CD14-positive monocyte (primary cell): ENCODE measurements at regions of chr5 and their contacts with region 1.

Region 1: DNA sequence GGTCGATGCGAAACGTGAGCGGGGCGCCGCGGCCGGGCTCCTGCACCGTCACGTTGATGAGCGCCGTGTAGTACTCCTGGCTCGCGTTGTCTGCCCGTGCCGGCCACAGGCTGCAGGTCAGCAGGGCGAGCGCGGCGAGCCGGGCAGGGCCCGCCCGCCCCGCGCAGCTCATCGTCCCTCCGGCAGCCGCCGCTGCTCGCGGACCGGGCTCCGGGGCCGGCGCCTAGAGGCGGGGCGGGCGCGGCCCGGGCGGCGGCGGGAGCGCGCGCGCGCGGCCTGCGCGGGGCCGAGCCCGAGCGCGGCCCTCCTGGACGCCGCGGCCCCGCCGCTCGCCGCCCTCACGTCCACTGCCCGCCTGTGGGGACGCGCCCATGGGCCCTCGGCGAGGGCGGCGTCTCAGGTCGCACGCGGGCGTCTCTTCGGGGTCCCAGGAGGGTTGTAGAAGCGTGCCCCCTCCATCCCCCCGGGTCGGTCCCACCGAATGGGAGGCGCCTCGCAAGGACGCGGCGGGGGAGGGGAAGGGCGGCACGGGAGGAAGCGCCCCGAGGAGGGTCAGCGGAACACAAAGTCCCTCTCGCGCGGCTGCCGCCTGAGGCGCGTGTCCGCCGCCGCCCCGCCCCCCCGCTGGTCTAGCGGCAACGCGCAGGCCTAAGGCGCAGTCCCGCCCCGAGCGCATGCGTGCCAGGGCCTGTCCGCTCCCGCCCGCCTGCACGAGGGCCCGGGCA is at the start of gene RNF130:
- DNase-seq: peak; percentile 93 to 95 (median 93)
- H3K4me3 ChIP-seq: peak within 1 kb of the TSS; percentile 75 to 82 (median 82)
- H3K4me3 Mint-ChIP-seq: peak within 1 kb of the TSS; percentile 92 to 98
- H3K27ac ChIP-seq: peak within 1 kb of the TSS; percentile 92 to 93
- H3K27ac Mint-ChIP-seq: peak within 1 kb of the TSS; percentile 93 to 97 (median 96)
- H3K4me1 ChIP-seq: peaks cover 42 to 45% of the 10 kb centered on the region in 2 donors
- H3K4me1 Mint-ChIP-seq: peaks cover 39% of the 10 kb centered on the region
- H3K27me3 ChIP-seq: no peaks in the 10 kb centered on the region
- H3K27me3 Mint-ChIP-seq: peaks cover 3 to 5% (median 5%) of the 10 kb centered on the region in 3 donors
- CTCF ChIP-seq: no peak
- polyA plus RNA-seq, gene RNF130: 294 to 439 (median 376) TPM

Region 2: DNA sequence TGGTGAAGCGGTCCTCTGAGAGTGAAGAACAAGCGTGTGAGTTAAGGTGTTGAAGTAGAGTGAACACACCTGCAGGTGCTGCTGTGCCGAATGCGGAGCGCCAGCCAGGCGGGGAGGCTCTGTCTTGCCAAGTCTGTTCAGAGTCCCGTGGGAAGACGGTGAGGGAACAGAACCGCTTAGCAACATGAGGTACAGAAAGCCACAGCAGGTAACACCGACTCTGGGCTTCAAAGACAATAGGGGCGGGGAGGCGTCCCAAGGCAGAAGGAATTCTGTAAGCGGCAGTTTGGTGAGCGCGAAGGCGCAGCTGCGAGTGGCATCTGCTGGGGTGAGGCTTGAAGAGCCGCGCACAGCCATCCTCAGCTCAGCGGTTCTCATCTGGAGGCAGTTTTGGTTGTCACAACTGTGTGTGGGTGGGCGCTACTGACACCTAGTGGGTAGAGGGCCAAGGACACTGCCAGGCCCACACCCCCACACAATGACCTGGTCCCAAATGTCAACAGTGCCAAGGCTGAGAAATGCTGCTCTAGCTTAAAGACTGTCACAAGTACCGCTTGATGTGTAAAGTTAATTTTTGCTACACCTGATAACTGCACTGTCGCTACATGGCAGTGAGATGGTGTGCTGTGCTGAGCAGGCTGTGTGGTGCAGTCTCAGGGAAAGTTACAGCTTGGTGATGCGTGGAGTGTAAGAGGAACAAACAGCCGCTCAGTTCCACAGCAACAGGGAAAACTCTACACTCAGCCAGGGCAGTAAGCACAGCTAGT is 96.6 kb before region 1 on chr5:
- intact Hi-C with region 1: loop called in 1 of 2 experiments (anchors 10 kb)
- DNase-seq: peak; percentile 10 to 29 (median 21)
- H3K4me3 ChIP-seq: no peak overlapping the region
- H3K4me3 Mint-ChIP-seq: no peak overlapping the region
- H3K27ac ChIP-seq: peak overlapping the region in 1 of 2 donors; percentile 39
- H3K27ac Mint-ChIP-seq: peak overlapping the region; percentile 15 to 78 (median 35)
- H3K4me1 ChIP-seq: peaks cover 25% of the 10 kb centered on the region in 2 donors
- H3K4me1 Mint-ChIP-seq: peaks cover 27% of the 10 kb centered on the region
- H3K27me3 ChIP-seq: no peaks in the 10 kb centered on the region
- H3K27me3 Mint-ChIP-seq: no peaks in the 10 kb centered on the region
- CTCF ChIP-seq: peak; percentile 56

Region 3: GRCh38 chr5:180009581-180009980 is 62.1 kb before region 1 on chr5:
- intact Hi-C with region 1: no loop called
- DNase-seq: no peak
- H3K4me3 ChIP-seq: no peak overlapping the region
- H3K4me3 Mint-ChIP-seq: no peak overlapping the region
- H3K27ac ChIP-seq: no peak overlapping the region
- H3K27ac Mint-ChIP-seq: no peak overlapping the region
- H3K4me1 ChIP-seq: peaks cover 0 to 20% of the 10 kb centered on the region in 2 donors
- H3K4me1 Mint-ChIP-seq: peaks cover 25% of the 10 kb centered on the region
- H3K27me3 ChIP-seq: no peaks in the 10 kb centered on the region
- H3K27me3 Mint-ChIP-seq: no peaks in the 10 kb centered on the region
- CTCF ChIP-seq: no peak

Region 4: GRCh38 chr5:180021805-180022217 is 49.9 kb before region 1 on chr5:
- intact Hi-C with region 1: loop called in 1 of 2 experiments (anchors 5 kb)
- DNase-seq: no peak
- H3K4me3 ChIP-seq: no peak overlapping the region
- H3K4me3 Mint-ChIP-seq: no peak overlapping the region
- H3K27ac ChIP-seq: peak overlapping the region in 1 of 2 donors; percentile 16
- H3K27ac Mint-ChIP-seq: peak overlapping the region in 1 of 7 donors; percentile 0
- H3K4me1 ChIP-seq: peaks cover 21 to 33% of the 10 kb centered on the region in 2 donors
- H3K4me1 Mint-ChIP-seq: peaks cover 30% of the 10 kb centered on the region
- H3K27me3 ChIP-seq: no peaks in the 10 kb centered on the region
- H3K27me3 Mint-ChIP-seq: peaks cover 0 to 3% (median 0%) of the 10 kb centered on the region in 3 donors
- CTCF ChIP-seq: no peak

Region 5: GRCh38 chr5:180034564-180034963 is 37.1 kb before region 1 on chr5:
- intact Hi-C with region 1: loop called in 1 of 2 experiments (anchors 2 kb)
- DNase-seq: peak; percentile 58 to 91 (median 69)
- H3K4me3 ChIP-seq: no peak overlapping the region
- H3K4me3 Mint-ChIP-seq: no peak overlapping the region
- H3K27ac ChIP-seq: peak overlapping the region in 1 of 2 donors; percentile 58
- H3K27ac Mint-ChIP-seq: peak overlapping the region in 5 of 7 donors; percentile 35 to 91 (median 67)
- H3K4me1 ChIP-seq: no peaks in the 10 kb centered on the region
- H3K4me1 Mint-ChIP-seq: peaks cover 5% of the 10 kb centered on the region
- H3K27me3 ChIP-seq: no peaks in the 10 kb centered on the region
- H3K27me3 Mint-ChIP-seq: no peaks in the 10 kb centered on the region
- CTCF ChIP-seq: no peak

Region 6: GRCh38 chr5:180116077-180116999 is 44.6 kb after region 1 on chr5:
- intact Hi-C with region 1: no loop called
- DNase-seq: no peak
- H3K4me3 ChIP-seq: no peak overlapping the region
- H3K4me3 Mint-ChIP-seq: no peak overlapping the region
- H3K27ac ChIP-seq: no peak overlapping the region
- H3K27ac Mint-ChIP-seq: peak overlapping the region in 1 of 7 donors; percentile 46
- H3K4me1 ChIP-seq: no peaks in the 10 kb centered on the region
- H3K4me1 Mint-ChIP-seq: no peaks in the 10 kb centered on the region
- H3K27me3 ChIP-seq: no peaks in the 10 kb centered on the region
- H3K27me3 Mint-ChIP-seq: peaks cover 0 to 5% (median 0%) of the 10 kb centered on the region in 3 donors
- CTCF ChIP-seq: no peak

Region 7: DNA sequence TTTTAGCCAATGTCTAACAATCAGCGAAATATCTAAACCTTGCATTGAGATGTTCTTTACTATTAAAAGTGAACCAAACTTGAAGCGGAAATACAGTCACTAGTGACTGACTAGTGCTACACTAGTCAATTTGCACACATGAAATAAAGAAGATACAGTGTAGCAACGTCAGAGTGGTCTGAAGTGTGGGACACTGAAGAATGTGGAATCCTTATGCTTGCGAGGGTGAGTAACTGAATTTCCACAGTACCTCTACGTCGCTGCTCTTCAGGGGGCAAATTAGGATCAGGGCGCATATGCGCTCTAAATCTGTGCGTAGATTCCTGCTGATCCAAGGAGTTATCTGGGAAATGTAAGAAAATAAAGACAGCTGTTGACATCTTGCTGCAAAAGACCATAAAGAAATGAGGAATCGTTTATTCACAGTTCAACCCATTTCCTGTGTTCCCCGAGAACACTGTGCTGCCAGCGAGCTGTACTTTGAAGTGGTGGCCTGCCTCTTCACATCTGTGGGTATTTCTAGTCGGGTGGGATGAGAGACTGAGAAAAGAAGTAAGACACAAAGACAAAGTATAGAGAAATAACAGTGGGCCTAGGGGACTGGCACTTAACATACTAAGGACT is 617.5 kb after region 1 on chr5:
- intact Hi-C with region 1: no loop called
- DNase-seq: no peak
- H3K4me3 ChIP-seq: no peak overlapping the region
- H3K4me3 Mint-ChIP-seq: no peak overlapping the region
- H3K27ac ChIP-seq: no peak overlapping the region
- H3K27ac Mint-ChIP-seq: no peak overlapping the region
- H3K4me1 ChIP-seq: no peaks in the 10 kb centered on the region
- H3K4me1 Mint-ChIP-seq: no peaks in the 10 kb centered on the region
- H3K27me3 ChIP-seq: no peaks in the 10 kb centered on the region
- H3K27me3 Mint-ChIP-seq: peaks cover 7 to 11% (median 7%) of the 10 kb centered on the region in 3 donors
- CTCF ChIP-seq: no peak